Ovary (tissue), 10 donors: ENCODE measurements at regions of chr15 and their contacts with region 1.

Region 1: DNA sequence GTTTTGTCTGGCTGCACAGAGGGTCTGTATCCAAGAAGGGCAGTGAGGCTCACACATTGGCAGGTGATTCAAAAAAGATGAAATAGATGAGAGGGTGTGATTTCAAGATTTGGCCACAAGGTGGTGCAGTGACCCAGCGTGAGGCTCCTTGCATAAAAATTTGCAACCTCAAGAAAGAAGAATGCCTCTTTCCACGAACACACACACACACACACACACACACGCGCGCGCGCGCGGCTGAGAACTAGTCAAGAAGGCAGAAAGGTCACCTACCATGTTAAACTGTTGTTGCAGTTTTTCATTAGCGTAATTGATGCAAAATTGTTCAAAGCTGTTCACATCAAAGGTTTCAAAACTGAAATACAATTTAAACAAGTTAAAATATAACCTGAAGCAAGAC is 39.2 kb downstream of the MYO5C start:
- DNase-seq: peak; percentile 53 to 76 (median 63)
- H3K4me3 ChIP-seq: no peak overlapping the region
- H3K27ac ChIP-seq: no peak overlapping the region
- H3K4me1 ChIP-seq: no peaks in the 10 kb centered on the region
- H3K27me3 ChIP-seq: no peaks in the 10 kb centered on the region
- CTCF ChIP-seq: peak in 2 of 3 donors; percentile 37 to 59
- EP300 ChIP-seq: no peak
- POLR2A ChIP-seq: no peak

Region 2: DNA sequence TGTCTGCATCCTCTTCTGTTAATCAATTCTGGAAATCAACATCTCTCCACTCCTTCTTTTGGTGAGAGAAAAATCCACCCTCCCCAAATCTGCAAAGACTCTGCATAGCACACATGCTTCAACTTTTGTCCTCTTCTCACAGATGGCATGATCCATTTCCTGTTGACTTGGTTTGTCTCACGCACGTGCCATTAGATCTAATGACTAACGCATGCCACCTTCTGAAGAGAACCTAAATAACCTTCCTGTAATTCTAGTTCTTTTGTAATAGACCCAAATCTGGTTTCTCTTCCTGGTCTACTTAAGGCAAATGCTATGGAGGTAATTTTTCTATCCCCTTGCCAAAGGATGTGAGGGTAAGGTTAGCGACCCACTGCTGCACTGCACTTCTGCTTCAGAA is 473.8 kb after region 1 on chr15:
- intact Hi-C with region 1: loop called in 3 of 4 experiments (anchors 5 kb)
- DNase-seq: no peak
- H3K4me3 ChIP-seq: no peak overlapping the region
- H3K27ac ChIP-seq: no peak overlapping the region
- H3K4me1 ChIP-seq: peaks cover 5% of the 10 kb centered on the region
- H3K27me3 ChIP-seq: no peaks in the 10 kb centered on the region
- CTCF ChIP-seq: no peak
- EP300 ChIP-seq: no peak
- POLR2A ChIP-seq: no peak

Region 3: DNA sequence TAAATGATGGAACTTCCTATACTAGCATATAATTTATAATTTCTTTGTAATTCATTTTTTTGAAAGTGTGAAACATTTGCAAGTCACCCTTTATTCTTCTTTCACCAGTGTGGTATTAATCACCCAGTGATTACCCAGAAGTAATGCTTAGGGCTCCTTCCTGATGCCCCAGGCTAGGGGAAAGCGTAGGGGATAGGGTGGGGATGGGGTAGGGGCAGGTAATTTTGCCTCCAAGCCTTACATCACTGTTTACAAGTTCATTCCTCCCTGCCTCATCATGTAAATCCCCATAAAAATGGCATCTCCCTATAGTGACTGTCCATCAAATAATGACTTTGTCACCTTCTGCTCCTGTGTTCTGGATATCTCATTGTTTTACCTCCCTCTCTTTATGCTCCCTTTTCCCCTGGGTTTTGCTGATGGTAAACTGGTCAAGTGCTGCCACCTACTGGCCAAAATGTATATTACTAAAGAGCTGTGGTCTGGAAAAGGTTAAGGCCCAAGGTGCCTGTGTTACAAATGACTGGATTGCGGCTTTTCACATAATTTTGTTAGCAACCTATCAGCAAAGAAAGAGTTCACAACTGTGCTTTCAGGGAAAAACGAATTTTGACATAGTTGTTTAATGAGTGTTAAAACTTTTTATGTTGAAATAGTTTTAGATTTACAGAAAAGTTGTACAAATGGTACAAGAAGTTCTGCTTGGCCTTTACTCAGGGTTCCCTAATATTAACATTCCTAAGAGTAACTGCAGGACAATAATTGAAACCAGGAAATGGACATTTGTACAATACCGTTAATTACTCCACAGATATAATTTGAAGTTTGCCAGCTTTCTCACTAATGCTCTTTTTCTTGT is 479.1 kb after region 1 on chr15:
- intact Hi-C with region 1: loop called (anchors 2 to 5 kb)
- DNase-seq: peak in 4 of 5 donors; percentile 38 to 67 (median 40)
- H3K4me3 ChIP-seq: no peak overlapping the region
- H3K27ac ChIP-seq: no peak overlapping the region
- H3K4me1 ChIP-seq: peaks cover 5% of the 10 kb centered on the region
- H3K27me3 ChIP-seq: no peaks in the 10 kb centered on the region
- CTCF ChIP-seq: peak; percentile 70 to 83 (median 75)
- EP300 ChIP-seq: no peak
- POLR2A ChIP-seq: no peak